WTC11 (cell line): ENCODE measurements at regions of chr15 and their contacts with region 1.

Region 1: DNA sequence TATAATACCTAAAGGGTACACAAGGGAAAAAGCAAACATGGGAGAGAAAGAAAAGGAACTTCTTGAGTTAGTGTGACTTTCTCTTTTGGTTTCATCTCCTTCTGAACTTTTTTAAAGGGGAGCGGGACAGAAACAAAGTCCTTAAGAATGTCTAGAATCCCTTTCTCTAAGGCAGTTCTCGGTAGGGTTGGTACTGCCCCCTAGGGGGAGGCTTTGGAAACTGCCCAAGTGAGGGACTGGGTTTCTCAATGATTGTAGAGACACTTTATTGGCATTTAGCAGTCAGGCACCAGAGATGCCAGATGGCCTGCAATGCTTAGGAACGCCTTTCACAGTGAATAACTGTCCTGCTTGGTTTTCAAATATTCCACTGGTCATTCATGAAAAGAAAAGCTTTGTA is 172.7 kb downstream of the WDR72 start:
- DNase-seq: peak; percentile 87
- ATAC-seq: peak; percentile 93
- H3K4me3 Mint-ChIP-seq: no peak overlapping the region
- H3K27ac Mint-ChIP-seq: no peak overlapping the region
- H3K4me1 Mint-ChIP-seq: peaks cover 22% of the 10 kb centered on the region
- H3K27me3 Mint-ChIP-seq: no peaks in the 10 kb centered on the region
- CTCF ChIP-seq: peak; percentile 67

Region 2: DNA sequence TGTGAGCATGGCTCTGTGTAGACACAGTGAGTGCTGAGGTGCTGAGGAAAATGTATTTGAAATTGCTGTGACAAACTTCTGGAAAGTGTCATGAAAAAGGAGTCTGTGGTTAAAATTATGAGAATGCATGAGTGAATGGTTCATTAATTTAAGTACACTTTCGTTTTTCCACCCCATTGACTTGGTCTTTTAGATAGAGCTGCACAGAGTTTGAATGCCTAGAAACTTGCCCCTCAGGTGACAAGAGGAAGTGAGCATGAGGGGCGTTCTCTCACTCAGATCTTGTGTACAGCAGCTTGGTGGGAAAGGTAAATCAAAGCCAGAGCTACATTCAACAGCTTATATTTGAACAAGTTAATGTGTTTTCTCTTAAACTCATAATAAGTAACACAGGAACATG is 124.1 kb before region 1 on chr15:
- CTCF ChIA-PET with region 1: no interaction called
- POLR2A ChIA-PET with region 1: interaction called, 12 read pairs
- DNase-seq: no peak
- ATAC-seq: no peak
- H3K4me3 Mint-ChIP-seq: no peak overlapping the region
- H3K27ac Mint-ChIP-seq: no peak overlapping the region
- H3K4me1 Mint-ChIP-seq: peaks cover 7% of the 10 kb centered on the region
- H3K27me3 Mint-ChIP-seq: no peaks in the 10 kb centered on the region; the same call in none of the 2 replicates
- CTCF ChIP-seq: no peak